PC-3 (cell line): ENCODE measurements at regions of chr5 and their contacts with region 1.

Region 1: DNA sequence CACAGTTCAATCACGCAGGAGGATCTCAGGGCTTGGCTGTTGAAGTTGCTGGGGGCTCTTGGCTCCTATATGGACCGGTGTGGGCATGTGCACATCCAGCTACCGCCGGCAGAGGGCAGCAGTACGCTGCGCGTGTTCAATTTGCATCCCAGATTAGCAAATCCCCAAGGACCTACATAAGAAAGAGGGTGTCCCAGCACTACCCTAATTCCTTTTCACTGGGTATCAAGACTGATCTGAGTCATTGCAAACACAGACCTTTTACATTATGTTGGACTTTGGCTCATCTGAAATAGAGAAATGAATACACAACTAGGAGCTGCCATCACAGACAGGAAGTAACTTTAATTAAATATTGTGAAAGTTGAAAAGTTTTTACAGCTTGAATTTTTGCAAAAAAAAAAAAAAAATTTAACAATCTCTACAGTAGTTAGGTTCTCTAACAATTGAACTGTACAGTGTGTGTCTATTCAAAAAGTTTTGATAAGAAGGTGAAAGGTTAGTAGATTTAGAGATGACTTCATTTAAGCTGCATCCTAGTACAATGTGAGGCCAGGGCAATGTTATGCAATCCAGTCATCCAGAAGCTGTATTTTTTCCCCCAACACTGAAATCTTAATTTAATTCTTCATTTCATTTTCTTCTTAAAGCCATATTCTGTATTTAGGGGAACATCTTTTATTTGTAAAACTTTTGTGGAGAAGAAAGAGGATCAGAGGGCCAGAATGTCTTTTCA is 404.0 kb downstream of the EBF1 start:
- DNase-seq: peak; percentile 70
- ATAC-seq: peak; percentile 85
- H3K4me3 ChIP-seq: no peak overlapping the region
- H3K27ac ChIP-seq: no peak overlapping the region
- H3K4me1 ChIP-seq: no peaks in the 10 kb centered on the region
- H3K27me3 ChIP-seq: no peaks in the 10 kb centered on the region; the same call in 1 of the 2 replicates
- CTCF ChIP-seq: peak; percentile 90

Region 2: GRCh38 chr5:158074992-158075769 is 620.6 kb before region 1 on chr5:
- CTCF ChIA-PET with region 1: interaction called, 7 read pairs
- POLR2A ChIA-PET with region 1: no interaction called
- intact Hi-C with region 1: loop called (anchors 2 kb)
- DNase-seq: peak; percentile 86
- ATAC-seq: peak; percentile 97
- H3K4me3 ChIP-seq: peak overlapping the region; percentile 55
- H3K27ac ChIP-seq: no peak overlapping the region
- H3K4me1 ChIP-seq: peaks cover 5% of the 10 kb centered on the region
- H3K27me3 ChIP-seq: peaks cover 47% of the 10 kb centered on the region
- CTCF ChIP-seq: peak; percentile 98

Region 3: DNA sequence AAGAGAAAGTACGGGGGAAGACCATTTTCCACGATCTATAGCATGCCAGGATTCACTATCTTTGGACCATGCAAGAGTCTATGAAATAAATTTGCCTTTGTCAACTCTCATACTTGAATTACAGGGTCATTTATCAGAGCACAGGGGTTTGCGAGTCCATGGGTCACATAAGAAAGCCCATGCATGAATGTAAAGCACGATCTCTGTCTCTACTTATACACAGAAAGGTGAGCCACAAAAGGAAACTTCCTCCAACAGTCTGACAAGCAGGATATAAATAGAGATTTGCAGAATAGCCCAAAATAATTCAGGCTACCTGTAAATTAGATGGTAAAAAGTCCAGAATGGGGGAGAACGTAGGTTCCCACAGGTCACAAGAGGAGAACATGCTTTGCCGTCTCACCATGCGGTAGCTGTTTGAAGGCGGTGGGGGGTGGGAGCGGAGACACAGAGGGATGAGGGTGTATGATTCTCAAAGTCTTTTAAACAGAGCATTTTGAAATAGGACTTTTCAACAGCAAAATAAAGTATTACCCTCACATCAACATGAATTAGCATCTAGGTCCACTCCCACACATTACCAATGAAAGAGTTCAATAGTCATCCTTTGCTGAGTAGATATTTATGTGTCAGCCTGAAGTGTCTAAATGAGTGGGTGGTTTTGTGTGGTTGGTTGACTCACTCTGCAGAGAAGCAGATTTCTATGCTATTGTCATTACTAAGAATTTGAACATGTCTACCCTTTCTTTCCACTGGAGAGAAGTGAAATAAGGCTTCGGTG is 124.3 kb after region 1 on chr5:
- CTCF ChIA-PET with region 1: interaction called, 4 read pairs
- POLR2A ChIA-PET with region 1: no interaction called
- intact Hi-C with region 1: loop called (anchors 5 kb)
- DNase-seq: peak; percentile 53
- ATAC-seq: peak; percentile 66
- H3K4me3 ChIP-seq: no peak overlapping the region
- H3K27ac ChIP-seq: peak overlapping the region; percentile 25; the same call in 1 of the 2 replicates
- H3K4me1 ChIP-seq: peaks cover 7% of the 10 kb centered on the region; the same call in 1 of the 2 replicates
- H3K27me3 ChIP-seq: no peaks in the 10 kb centered on the region
- CTCF ChIP-seq: no peak

Region 4: DNA sequence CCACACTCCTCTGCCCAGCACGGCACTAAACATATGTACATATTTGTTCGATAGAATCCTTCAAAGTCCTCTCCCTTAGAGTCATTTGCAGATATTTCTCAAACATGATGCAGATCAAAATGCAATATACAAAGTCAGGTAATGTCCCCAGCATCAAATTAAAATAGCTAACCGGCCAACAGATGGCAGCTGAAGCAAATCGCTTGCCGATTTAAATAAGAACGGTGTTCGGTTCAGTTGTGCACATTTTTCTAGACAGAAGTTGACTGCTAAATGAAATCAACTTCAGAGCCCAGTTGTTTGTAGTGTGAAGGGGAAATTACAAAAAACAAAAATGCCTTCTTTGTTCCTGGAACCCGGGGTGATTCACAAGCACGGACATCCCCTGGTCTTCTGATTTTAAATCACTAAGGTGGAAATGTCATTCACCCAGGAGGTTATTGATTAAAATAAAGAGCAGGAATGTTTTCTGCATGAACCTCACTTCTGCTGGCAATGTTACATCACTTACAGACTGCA is 184.8 kb after region 1 on chr5:
- CTCF ChIA-PET with region 1: interaction called, 3 read pairs
- POLR2A ChIA-PET with region 1: no interaction called
- intact Hi-C with region 1: loop called (anchors 5 kb)
- DNase-seq: peak; percentile 15
- ATAC-seq: no peak; the same call in 1 of the 2 replicates
- H3K4me3 ChIP-seq: peak overlapping the region; percentile 16; the same call in 1 of the 2 replicates
- H3K27ac ChIP-seq: no peak overlapping the region
- H3K4me1 ChIP-seq: peaks cover 4% of the 10 kb centered on the region; the same call in 1 of the 2 replicates
- H3K27me3 ChIP-seq: no peaks in the 10 kb centered on the region
- CTCF ChIP-seq: peak; percentile 29; the same call in 1 of the 2 replicates

Region 5: GRCh38 chr5:159106569-159107282 is 411.0 kb after region 1 on chr5:
- CTCF ChIA-PET with region 1: interaction called, 27 read pairs
- POLR2A ChIA-PET with region 1: no interaction called
- intact Hi-C with region 1: loop called (anchors 1 kb)
- DNase-seq: peak; percentile 69
- ATAC-seq: peak; percentile 94
- H3K4me3 ChIP-seq: peak overlapping the region; percentile 44; the same call in 1 of the 2 replicates
- H3K27ac ChIP-seq: no peak overlapping the region
- H3K4me1 ChIP-seq: 0 out of 2 replicates have a peak, but pooled peaks cover 8% of the 10 kb centered on the region
- H3K27me3 ChIP-seq: peaks cover 44% of the 10 kb centered on the region
- CTCF ChIP-seq: peak; percentile 85